B cell (primary cell): ENCODE measurements at regions of chr5 and their contacts with region 1.

Region 1: DNA sequence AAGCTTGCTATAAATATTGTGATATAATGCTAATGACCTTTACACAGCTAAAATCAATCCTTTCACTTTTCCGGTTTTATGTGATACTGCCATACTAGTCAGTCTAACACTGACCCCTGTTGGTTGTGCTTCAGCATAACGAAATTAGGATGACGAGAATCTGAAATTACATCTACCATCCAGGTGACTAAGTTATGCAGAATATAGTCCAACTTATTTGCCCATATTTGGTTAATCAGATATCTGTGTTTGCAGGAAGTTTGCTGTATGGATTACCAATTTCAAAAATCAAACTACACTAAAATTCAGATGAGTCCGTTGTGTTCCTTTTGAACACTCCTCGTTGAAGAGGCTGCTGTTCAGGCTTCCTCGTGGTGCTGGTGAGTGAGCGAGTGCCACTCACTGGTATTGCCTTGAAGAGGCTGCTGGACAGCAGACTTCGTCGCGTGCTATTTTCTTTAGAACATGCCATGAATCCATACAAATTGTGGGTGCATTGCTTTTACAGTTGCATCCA is 32.5 kb downstream of the TENT4A start:
- DNase-seq: peak; percentile 67
- ATAC-seq: peak; percentile 67
- H3K4me3 ChIP-seq: no peak overlapping the region
- H3K4me3 Mint-ChIP-seq: no peak overlapping the region
- H3K27ac ChIP-seq: no peak overlapping the region
- H3K27ac Mint-ChIP-seq: peak overlapping the region; percentile 46
- H3K4me1 ChIP-seq: no peaks in the 10 kb centered on the region
- H3K4me1 Mint-ChIP-seq: peaks cover 6% of the 10 kb centered on the region
- H3K27me3 ChIP-seq: no peaks in the 10 kb centered on the region
- H3K27me3 Mint-ChIP-seq: no peaks in the 10 kb centered on the region
- CTCF ChIP-seq: peak; percentile 89

Region 2: GRCh38 chr5:6135977-6136376 is 609.8 kb before region 1 on chr5:
- CTCF ChIA-PET with region 1: no interaction called
- POLR2A ChIA-PET with region 1: no interaction called
- intact Hi-C with region 1: no loop called
- DNase-seq: no peak
- ATAC-seq: peak; percentile 28
- H3K4me3 ChIP-seq: no peak overlapping the region
- H3K4me3 Mint-ChIP-seq: no peak overlapping the region
- H3K27ac ChIP-seq: no peak overlapping the region
- H3K27ac Mint-ChIP-seq: no peak overlapping the region
- H3K4me1 ChIP-seq: no peaks in the 10 kb centered on the region
- H3K4me1 Mint-ChIP-seq: peaks cover 6% of the 10 kb centered on the region
- H3K27me3 ChIP-seq: peaks cover 0 to 2% (median 0%) of the 10 kb centered on the region in 4 experiments
- H3K27me3 Mint-ChIP-seq: peaks cover 5% of the 10 kb centered on the region
- CTCF ChIP-seq: no peak

Region 3: GRCh38 chr5:6291961-6292360 is 453.8 kb before region 1 on chr5:
- CTCF ChIA-PET with region 1: interaction called, 5 read pairs
- POLR2A ChIA-PET with region 1: no interaction called
- intact Hi-C with region 1: loop called (anchors 2 kb)
- DNase-seq: peak; percentile 19
- ATAC-seq: peak; percentile 28
- H3K4me3 ChIP-seq: no peak overlapping the region
- H3K4me3 Mint-ChIP-seq: no peak overlapping the region
- H3K27ac ChIP-seq: no peak overlapping the region
- H3K27ac Mint-ChIP-seq: no peak overlapping the region
- H3K4me1 ChIP-seq: no peaks in the 10 kb centered on the region
- H3K4me1 Mint-ChIP-seq: no peaks in the 10 kb centered on the region
- H3K27me3 ChIP-seq: no peaks in the 10 kb centered on the region
- H3K27me3 Mint-ChIP-seq: no peaks in the 10 kb centered on the region
- CTCF ChIP-seq: no peak

Region 4: DNA sequence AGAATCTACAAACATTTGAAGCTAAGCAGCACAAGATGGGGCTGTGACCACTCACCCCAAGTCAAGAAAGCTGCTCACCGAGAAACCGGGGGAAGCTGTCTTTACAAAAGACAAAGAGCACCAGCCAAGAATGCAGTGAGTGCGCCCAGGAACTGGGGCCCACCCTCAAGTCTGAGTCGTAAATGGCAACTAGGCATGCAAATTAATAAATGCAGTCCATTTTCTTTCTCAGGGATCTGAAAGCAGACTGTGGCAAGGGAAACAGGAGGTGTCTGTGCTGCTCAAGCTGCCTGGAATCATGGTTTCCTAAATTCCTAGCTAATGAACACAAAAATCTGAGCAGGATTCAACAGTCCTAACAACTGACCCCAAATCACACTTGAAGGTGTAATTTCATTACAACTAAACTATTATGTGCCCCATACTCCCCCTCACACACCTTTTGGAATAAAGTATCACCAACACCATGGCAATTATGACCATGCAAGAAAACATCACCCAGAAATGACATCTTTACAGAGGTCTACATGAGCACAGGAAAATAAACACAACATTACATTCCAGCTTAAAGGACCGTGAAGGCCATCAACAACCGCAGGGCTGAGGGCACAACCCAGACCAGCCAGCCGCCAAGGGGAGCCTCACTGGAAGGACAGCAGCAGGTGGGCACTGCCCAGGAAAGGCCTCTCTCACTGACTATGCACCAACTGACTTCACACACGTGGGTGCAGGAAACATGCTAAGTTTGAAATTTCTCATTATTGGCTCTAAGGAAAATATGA is 130.5 kb before region 1 on chr5:
- CTCF ChIA-PET with region 1: interaction called, 14 read pairs
- POLR2A ChIA-PET with region 1: no interaction called
- intact Hi-C with region 1: no loop called
- DNase-seq: no peak
- ATAC-seq: no peak
- H3K4me3 ChIP-seq: no peak overlapping the region
- H3K4me3 Mint-ChIP-seq: no peak overlapping the region
- H3K27ac ChIP-seq: no peak overlapping the region
- H3K27ac Mint-ChIP-seq: no peak overlapping the region
- H3K4me1 ChIP-seq: no peaks in the 10 kb centered on the region
- H3K4me1 Mint-ChIP-seq: peaks cover 6% of the 10 kb centered on the region
- H3K27me3 ChIP-seq: no peaks in the 10 kb centered on the region
- H3K27me3 Mint-ChIP-seq: no peaks in the 10 kb centered on the region
- CTCF ChIP-seq: no peak

Region 5: GRCh38 chr5:6712577-6713275 is 33.0 kb before region 1 on chr5:
- CTCF ChIA-PET with region 1: interaction called, 8 read pairs
- POLR2A ChIA-PET with region 1: no interaction called
- intact Hi-C with region 1: loop called (anchors 1 kb)
- DNase-seq: peak; percentile 99
- ATAC-seq: peak; percentile 74
- H3K4me3 ChIP-seq: peak overlapping the region; percentile 58 to 92 (median 67)
- H3K4me3 Mint-ChIP-seq: peak overlapping the region; percentile 92
- H3K27ac ChIP-seq: peak overlapping the region; percentile 39 to 80
- H3K27ac Mint-ChIP-seq: peak overlapping the region; percentile 96
- H3K4me1 ChIP-seq: peaks cover 34 to 39% of the 10 kb centered on the region in 2 donors
- H3K4me1 Mint-ChIP-seq: peaks cover 41% of the 10 kb centered on the region
- H3K27me3 ChIP-seq: no peaks in the 10 kb centered on the region
- H3K27me3 Mint-ChIP-seq: no peaks in the 10 kb centered on the region
- CTCF ChIP-seq: peak; percentile 14

Region 6: GRCh38 chr5:6728011-6728794 is 17.6 kb before region 1 on chr5:
- CTCF ChIA-PET with region 1: interaction called, 12 read pairs
- POLR2A ChIA-PET with region 1: no interaction called
- intact Hi-C with region 1: no loop called
- DNase-seq: peak; percentile 46
- ATAC-seq: peak; percentile 94
- H3K4me3 ChIP-seq: no peak overlapping the region
- H3K4me3 Mint-ChIP-seq: peak overlapping the region; percentile 80
- H3K27ac ChIP-seq: no peak overlapping the region
- H3K27ac Mint-ChIP-seq: peak overlapping the region; percentile 87
- H3K4me1 ChIP-seq: peaks cover 29 to 34% of the 10 kb centered on the region in 2 donors
- H3K4me1 Mint-ChIP-seq: peaks cover 81% of the 10 kb centered on the region
- H3K27me3 ChIP-seq: no peaks in the 10 kb centered on the region
- H3K27me3 Mint-ChIP-seq: no peaks in the 10 kb centered on the region
- CTCF ChIP-seq: no peak

Region 7: DNA sequence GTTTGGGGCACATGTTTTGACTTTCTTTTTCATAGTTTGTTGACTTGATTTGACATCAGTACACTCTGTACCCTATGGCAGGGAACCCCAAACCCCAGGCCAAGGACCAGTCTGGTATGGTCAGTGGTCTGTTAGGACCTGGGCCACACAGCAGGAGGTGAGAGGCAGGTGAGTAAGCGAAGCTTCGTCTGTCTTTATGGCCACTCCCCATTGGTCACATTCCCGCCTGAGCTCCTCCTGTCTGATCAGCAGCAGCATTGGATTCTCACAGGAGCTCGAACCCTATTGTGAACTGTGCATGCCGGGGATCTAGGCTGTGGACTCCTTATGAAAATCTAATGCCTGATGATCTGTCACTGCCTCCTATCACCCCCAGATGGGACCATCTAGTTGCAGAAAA is 55.5 kb after region 1 on chr5:
- CTCF ChIA-PET with region 1: no interaction called
- POLR2A ChIA-PET with region 1: no interaction called
- intact Hi-C with region 1: no loop called
- DNase-seq: no peak
- ATAC-seq: no peak
- H3K4me3 ChIP-seq: no peak overlapping the region
- H3K4me3 Mint-ChIP-seq: no peak overlapping the region
- H3K27ac ChIP-seq: no peak overlapping the region
- H3K27ac Mint-ChIP-seq: no peak overlapping the region
- H3K4me1 ChIP-seq: no peaks in the 10 kb centered on the region
- H3K4me1 Mint-ChIP-seq: no peaks in the 10 kb centered on the region
- H3K27me3 ChIP-seq: no peaks in the 10 kb centered on the region
- H3K27me3 Mint-ChIP-seq: peaks cover 18% of the 10 kb centered on the region
- CTCF ChIP-seq: no peak